Activated naive CD8-positive, alpha-beta T cell treated with anti-CD3 and anti-CD28 coated beads, Interleukin-2, amount 10 ng/mL, durations not matched to agents 7 days and 5 days (primary cell): ENCODE measurements at regions of chr1 and their contacts with region 1.

Region 1: DNA sequence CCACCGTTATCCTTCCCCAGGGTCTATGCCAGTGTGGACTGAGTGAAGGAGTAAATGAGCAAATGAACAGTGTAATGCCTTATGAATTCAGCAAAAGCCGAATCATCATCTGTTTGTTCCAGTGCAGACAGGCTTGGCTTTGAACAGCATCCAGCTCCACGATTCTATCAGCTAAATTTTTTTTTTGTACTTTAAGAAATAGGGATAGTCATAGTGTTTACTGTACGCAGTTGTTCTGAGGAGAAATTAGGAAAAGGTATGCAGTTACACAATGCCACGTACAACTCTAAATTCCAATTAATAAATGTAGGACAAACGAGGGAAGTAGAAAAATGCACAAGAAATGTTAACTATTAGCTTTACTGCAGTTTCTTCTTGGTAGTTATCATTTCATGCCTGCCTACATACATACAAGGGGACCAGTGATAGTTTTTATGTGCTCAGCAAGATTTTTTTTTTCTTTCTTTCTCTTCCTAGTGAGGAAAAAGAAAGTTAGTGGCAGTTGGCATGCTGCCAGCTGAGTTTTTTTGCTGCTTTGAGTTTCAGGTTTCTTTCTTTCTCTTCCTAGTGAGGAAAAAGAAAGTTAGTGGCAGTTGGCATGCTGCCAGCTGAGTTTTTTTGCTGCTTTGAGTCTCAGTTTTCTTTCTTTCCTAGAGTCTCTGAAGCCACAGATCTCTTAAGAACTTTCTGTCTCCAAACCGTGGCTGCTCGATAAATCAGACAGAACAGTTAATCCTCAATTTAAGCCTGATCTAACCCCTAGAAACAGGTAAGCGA is at the start of gene IFI44L:
- DNase-seq: peak; percentile 56
- ATAC-seq: peak; percentile 51
- H3K4me3 Mint-ChIP-seq: peak within 1 kb of the TSS; percentile 93
- H3K27ac Mint-ChIP-seq: peak within 1 kb of the TSS; percentile 95
- H3K4me1 Mint-ChIP-seq: peaks cover 38% of the 10 kb centered on the region
- H3K27me3 Mint-ChIP-seq: peaks cover 2% of the 10 kb centered on the region
- total RNA-seq, gene IFI44L: 278 to 290 TPM

Region 2: DNA sequence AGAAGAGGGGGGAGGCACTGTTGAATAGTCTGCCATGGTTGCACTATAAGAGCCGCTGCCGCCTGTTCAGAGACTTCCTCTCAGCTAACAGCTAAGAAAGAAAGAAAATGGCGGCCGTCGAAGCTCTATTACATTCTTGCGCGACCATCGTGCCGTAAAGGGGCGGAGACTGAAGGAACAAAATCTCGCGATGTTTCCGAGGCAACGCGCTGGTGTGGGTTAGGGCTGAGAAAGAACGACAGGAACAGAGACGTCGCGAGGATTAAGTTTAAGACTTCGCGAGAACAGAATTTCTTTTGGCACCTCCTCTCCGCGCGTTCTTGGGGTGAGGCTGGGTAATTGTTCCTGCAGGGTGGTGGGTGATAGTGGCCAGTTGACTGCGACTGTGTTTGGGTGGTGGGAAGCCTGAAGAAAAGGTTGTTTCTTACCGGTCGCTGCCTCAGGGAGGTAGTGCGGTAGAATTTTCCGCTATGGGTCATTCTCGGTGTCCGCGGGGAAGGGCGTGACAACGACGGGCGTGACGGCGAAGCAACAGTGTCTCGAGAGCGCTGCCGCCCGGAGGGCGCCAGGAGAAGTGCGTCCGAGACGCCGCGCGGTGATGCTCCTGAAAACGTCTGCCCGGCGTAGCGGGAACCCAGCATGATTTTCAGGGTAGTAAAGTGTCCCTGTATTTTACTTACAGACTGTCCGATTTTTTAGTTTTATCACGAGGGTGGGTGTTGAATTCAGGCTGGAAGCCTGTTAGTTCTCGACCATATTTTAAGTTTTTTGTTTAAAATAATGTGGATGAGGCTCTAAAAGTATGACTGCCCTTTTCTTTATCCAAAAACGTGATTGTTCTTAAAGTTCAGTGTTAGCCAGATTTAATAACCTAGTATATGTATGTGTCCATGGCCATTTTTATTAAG is 640.8 kb before region 1 on chr1 and contains the start of gene FUBP1:
- POLR2A ChIA-PET with region 1: interaction called, 16 read pairs
- DNase-seq: peak; percentile 86
- ATAC-seq: peak; percentile 83
- H3K4me3 Mint-ChIP-seq: no peak within 1 kb of the TSS
- H3K27ac Mint-ChIP-seq: no peak within 1 kb of the TSS
- H3K4me1 Mint-ChIP-seq: peaks cover 35% of the 10 kb centered on the region
- H3K27me3 Mint-ChIP-seq: no peaks in the 10 kb centered on the region
- total RNA-seq, gene FUBP1: 223 to 228 TPM

Region 3: DNA sequence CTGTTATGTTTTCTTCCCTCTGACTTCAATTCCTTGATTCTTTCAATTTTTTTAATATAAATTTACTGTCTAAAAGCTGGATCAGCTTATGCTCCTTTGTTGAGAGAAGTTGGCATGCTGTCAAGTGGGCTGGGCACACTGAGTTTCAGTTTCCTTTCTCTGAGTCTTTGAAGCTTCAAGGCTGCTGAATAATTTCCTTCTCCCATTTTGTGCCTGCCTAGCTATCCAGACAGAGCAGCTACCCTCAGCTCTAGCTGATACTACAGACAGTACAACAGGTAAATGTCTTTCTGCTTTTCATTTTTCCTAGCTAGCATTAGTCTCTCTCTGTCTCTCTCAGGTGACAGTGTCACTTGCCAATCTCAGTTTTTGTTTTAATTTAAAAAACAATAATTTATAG is 29.6 kb after region 1 on chr1 and contains the start of gene IFI44:
- POLR2A ChIA-PET with region 1: interaction called, 100 read pairs
- DNase-seq: peak; percentile 48
- ATAC-seq: peak; percentile 78
- H3K4me3 Mint-ChIP-seq: peak within 1 kb of the TSS; percentile 97
- H3K27ac Mint-ChIP-seq: peak within 1 kb of the TSS; percentile 96
- H3K4me1 Mint-ChIP-seq: peaks cover 56% of the 10 kb centered on the region
- H3K27me3 Mint-ChIP-seq: no peaks in the 10 kb centered on the region
- total RNA-seq, gene IFI44: 180 to 186 TPM

Region 4: GRCh38 chr1:78664763-78665162 is 44.8 kb after region 1 on chr1:
- POLR2A ChIA-PET with region 1: interaction called, 13 read pairs
- DNase-seq: no peak
- ATAC-seq: peak; percentile 41
- H3K4me3 Mint-ChIP-seq: no peak overlapping the region
- H3K27ac Mint-ChIP-seq: no peak overlapping the region
- H3K4me1 Mint-ChIP-seq: peaks cover 24% of the 10 kb centered on the region
- H3K27me3 Mint-ChIP-seq: no peaks in the 10 kb centered on the region

Region 5: DNA sequence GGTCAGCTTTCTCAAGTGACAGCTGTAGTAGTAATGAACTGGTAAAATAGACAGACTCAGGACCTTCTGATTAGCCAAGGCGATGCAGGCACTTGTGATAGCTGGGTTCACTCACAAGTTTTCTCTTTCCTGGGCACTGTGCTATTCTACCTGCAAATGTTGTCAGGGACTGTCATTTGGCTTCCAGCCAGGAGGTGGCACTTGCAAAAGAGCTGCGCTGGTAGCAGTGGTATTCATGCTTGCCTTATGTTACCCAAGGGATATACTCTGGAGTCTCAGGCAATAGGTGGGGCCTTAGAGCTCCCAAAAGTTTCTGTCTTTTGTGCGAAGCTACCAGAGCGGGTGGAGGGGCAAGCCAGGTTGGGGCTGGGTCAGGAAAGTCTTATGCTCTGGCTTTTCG is 53.1 kb after region 1 on chr1:
- POLR2A ChIA-PET with region 1: interaction called, 21 read pairs
- DNase-seq: no peak
- ATAC-seq: peak; percentile 59
- H3K4me3 Mint-ChIP-seq: no peak overlapping the region
- H3K27ac Mint-ChIP-seq: no peak overlapping the region
- H3K4me1 Mint-ChIP-seq: peaks cover 32% of the 10 kb centered on the region
- H3K27me3 Mint-ChIP-seq: no peaks in the 10 kb centered on the region

Region 6: GRCh38 chr1:78678324-78678723 is 58.3 kb after region 1 on chr1:
- POLR2A ChIA-PET with region 1: interaction called, 21 read pairs
- DNase-seq: no peak
- ATAC-seq: peak; percentile 86
- H3K4me3 Mint-ChIP-seq: peak overlapping the region; percentile 70
- H3K27ac Mint-ChIP-seq: peak overlapping the region; percentile 92
- H3K4me1 Mint-ChIP-seq: peaks cover 24% of the 10 kb centered on the region
- H3K27me3 Mint-ChIP-seq: peaks cover 3% of the 10 kb centered on the region

Region 7: GRCh38 chr1:78716186-78716585 is 96.2 kb after region 1 on chr1:
- POLR2A ChIA-PET with region 1: no interaction called
- DNase-seq: no peak
- ATAC-seq: no peak
- H3K4me3 Mint-ChIP-seq: no peak overlapping the region
- H3K27ac Mint-ChIP-seq: no peak overlapping the region
- H3K4me1 Mint-ChIP-seq: no peaks in the 10 kb centered on the region
- H3K27me3 Mint-ChIP-seq: peaks cover 8% of the 10 kb centered on the region